Activated CD4-positive, alpha-beta memory T cell treated with anti-CD3 and anti-CD28 coated beads for 36 hours (primary cell): ENCODE measurements at regions of chr11 and their contacts with region 1.

Region 1: GRCh38 chr11:111565114-111565720 is 24.7 kb downstream of the LAYN start:
- DNase-seq: peak; percentile 70
- H3K4me3 Mint-ChIP-seq: no peak overlapping the region
- H3K27ac Mint-ChIP-seq: no peak overlapping the region
- H3K4me1 Mint-ChIP-seq: no peaks in the 10 kb centered on the region
- H3K27me3 Mint-ChIP-seq: no peaks in the 10 kb centered on the region

Region 2: DNA sequence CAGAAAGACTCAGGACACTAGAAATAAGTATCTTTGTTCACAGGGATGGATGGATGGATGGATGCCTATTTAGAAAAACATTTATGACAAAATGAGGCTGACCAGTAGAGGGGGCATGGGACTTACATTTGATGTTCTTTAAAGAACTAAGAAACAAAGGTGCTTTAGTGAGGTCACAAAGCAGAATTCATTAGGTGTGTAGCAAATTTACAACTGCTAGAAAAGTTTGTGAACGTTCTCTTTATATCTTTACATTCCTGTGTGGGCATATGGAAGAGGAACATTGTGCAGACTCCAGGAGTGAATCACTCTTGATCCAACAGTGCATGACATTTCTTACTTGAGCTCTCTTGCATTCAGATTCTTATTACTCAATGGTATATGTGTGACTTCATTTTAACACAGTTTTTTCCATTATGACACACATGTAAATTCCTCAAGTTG is 21.2 kb after region 1 on chr11:
- CTCF ChIA-PET with region 1: interaction called, 6 read pairs
- POLR2A ChIA-PET with region 1: no interaction called
- intact Hi-C with region 1: loop called (anchors 2 kb)
- DNase-seq: peak; percentile 35
- H3K4me3 Mint-ChIP-seq: no peak overlapping the region
- H3K27ac Mint-ChIP-seq: no peak overlapping the region
- H3K4me1 Mint-ChIP-seq: no peaks in the 10 kb centered on the region
- H3K27me3 Mint-ChIP-seq: no peaks in the 10 kb centered on the region

Region 3: DNA sequence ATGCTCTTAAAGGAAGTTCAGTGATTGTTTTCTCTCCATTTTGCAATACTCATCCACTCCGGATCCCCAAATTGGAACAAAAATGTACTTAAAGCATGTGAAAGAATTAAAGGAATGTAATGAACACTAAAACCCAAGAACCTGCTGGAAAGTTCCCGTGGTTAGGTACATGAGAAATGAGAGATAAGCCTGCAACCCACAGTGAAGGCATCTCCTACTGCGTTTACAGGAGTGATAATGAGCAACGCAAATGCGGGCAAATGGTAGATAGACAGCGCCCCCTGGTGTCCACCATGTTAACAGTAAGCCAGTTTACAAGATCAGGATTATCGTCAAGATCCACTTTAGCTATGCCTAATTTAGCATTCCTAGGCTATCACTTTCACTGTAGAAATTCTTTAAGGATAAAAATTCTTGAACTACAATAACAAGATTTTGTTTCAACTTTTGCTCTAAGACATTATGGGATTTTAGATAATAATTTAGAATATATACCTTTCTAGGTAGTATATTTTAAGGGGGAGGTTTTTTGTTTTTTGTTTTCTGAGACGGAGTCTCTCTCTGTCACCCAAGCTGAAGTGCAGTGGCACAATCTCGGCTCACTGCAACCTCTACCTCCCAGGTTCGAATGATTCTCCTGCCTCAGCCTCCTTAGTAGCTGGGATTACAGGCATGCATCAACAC is 276.3 kb after region 1 on chr11:
- CTCF ChIA-PET with region 1: interaction called, 19 read pairs
- POLR2A ChIA-PET with region 1: no interaction called
- intact Hi-C with region 1: loop called (anchors 1 kb)
- DNase-seq: peak; percentile 91
- H3K4me3 Mint-ChIP-seq: no peak overlapping the region
- H3K27ac Mint-ChIP-seq: no peak overlapping the region
- H3K4me1 Mint-ChIP-seq: peaks cover 11% of the 10 kb centered on the region
- H3K27me3 Mint-ChIP-seq: no peaks in the 10 kb centered on the region

Region 4: DNA sequence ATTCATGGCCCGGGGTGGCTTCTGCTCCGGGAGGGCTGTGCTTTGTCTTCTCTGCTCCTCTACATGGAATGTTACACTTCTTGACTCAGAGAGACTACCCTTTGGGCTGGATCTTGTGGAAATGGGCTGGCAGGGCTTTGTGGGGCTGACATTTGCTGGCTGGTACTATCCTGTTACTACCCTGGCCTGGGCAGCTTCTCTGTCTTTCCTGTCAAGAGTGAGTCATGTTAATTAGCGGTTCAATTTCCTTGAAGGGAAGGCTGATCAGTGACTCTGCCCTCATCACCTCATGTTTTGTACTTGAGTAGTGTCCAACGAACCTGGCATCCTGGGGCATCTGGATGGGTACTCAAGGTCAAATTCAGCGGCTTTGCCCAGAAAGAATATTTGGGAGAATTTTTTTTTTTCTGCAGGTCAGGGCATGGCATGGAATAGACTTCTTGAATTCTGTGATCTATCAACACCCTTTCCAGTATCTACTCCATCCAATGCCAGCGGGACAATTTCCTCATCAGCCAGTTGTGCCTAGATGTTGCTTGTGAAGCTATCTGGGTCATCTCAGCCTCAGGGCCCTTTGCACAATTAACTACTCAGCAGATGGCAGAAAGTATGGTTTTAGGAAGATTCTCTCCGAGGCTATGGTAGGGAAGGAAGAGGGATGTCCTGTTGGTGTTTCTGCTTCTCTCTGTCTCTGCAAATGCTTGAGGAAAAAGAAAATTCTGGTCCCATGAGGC is 836.0 kb after region 1 on chr11:
- CTCF ChIA-PET with region 1: no interaction called
- POLR2A ChIA-PET with region 1: no interaction called
- intact Hi-C with region 1: no loop called
- DNase-seq: no peak
- H3K4me3 Mint-ChIP-seq: no peak overlapping the region
- H3K27ac Mint-ChIP-seq: no peak overlapping the region
- H3K4me1 Mint-ChIP-seq: no peaks in the 10 kb centered on the region
- H3K27me3 Mint-ChIP-seq: no peaks in the 10 kb centered on the region